ENCODE measurements at regions of chr18 and their contacts with region 1.

Region 1: DNA sequence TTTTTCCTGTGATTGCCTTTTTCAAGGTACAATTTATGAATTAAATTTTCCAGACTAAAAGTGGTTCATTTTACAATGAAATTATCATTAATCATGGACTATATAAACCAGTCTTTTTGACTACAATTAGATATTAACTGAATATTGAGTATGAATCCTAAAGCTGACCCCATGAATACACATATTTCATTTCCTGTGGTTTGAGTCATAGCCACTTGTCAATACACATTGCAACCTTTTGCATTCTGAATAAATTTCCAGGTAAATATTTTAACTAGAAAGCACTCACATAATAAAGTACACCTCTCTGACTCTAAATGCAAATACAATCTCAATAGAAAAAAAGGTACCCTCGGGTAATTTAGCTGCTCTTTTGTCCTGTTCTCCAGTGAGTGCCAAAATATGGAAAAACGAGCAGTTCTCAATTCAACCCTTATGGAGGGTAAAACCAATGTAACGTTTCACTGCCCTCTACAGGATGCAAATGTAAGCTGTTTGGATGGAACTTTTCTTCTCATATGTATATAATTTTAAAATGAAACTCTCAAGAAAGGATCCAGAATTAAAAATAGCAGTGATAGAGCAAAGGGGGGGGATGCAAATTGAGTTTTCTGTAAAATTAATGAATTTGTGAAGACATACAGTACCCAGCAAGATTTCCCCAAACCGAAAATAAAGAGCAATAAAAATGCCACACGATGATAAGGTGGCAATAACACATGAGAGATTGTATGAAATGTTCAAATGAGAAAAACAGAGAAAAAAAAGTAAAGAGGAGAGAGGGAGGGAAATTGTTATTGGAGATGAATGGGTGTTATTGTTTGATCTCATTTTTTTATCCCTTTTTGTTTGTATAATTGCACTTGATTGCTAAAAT is 1795.7 kb upstream of the PIK3C3 start:
- DNase-seq: peak; percentile 1
- ATAC-seq: peak; percentile 85
- H3K4me3 ChIP-seq: no peak overlapping the region
- H3K27ac ChIP-seq: no peak overlapping the region
- H3K4me1 ChIP-seq: no peaks in the 10 kb centered on the region
- H3K27me3 ChIP-seq: no peaks in the 10 kb centered on the region
- CTCF ChIP-seq: peak; percentile 33 to 62 (median 44); a peak in 4 of 6 replicates
- EP300 ChIP-seq: no peak
- POLR2A ChIP-seq: no peak
- RAD21 ChIP-seq: peak; percentile 63

Region 2: DNA sequence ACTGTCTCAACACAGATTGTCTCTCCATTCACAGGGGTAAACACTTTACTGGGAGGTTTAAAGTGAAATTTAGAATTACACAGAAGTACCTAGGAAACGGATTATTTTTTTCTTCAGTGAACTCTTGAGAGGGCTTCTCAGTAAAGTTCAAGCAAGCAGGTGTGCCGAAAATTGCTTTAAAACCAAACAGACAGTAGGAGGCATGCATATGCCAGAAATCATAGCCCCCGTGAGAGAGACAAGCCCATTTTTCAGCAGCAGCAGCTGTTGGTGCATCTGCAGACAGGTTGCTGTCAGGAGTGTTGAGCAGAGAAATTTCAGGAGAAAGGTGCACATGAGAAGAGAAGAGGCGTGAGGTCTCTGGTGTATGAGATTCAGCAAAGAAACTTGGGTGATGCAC is 478.3 kb before region 1 on chr18:
- CTCF ChIA-PET with region 1: interaction called, 11 read pairs
- POLR2A ChIA-PET with region 1: no interaction called
- RAD21 ChIA-PET with region 1: no interaction called
- SMC1A ChIA-PET with region 1: interaction called, 3 read pairs
- in situ Hi-C with region 1: no loop called
- intact Hi-C with region 1: loop called (anchors 10 kb)
- DNase-seq: no peak
- ATAC-seq: no peak
- H3K4me3 ChIP-seq: no peak overlapping the region
- H3K27ac ChIP-seq: no peak overlapping the region
- H3K4me1 ChIP-seq: no peaks in the 10 kb centered on the region
- H3K27me3 ChIP-seq: no peaks in the 10 kb centered on the region
- CTCF ChIP-seq: no peak; a peak in 1 of 6 replicates
- EP300 ChIP-seq: no peak
- POLR2A ChIP-seq: no peak
- RAD21 ChIP-seq: no peak

Region 3: GRCh38 chr18:39946623-39947061 is 212.7 kb before region 1 on chr18:
- CTCF ChIA-PET with region 1: no interaction called
- POLR2A ChIA-PET with region 1: no interaction called
- RAD21 ChIA-PET with region 1: no interaction called
- SMC1A ChIA-PET with region 1: no interaction called
- in situ Hi-C with region 1: no loop called
- intact Hi-C with region 1: loop called (anchors 5 kb)
- DNase-seq: no peak
- ATAC-seq: peak; percentile 22; the same call in 2 of the 3 replicates
- H3K4me3 ChIP-seq: no peak overlapping the region
- H3K27ac ChIP-seq: no peak overlapping the region
- H3K4me1 ChIP-seq: no peaks in the 10 kb centered on the region
- H3K27me3 ChIP-seq: no peaks in the 10 kb centered on the region
- CTCF ChIP-seq: no peak
- EP300 ChIP-seq: no peak
- POLR2A ChIP-seq: no peak
- RAD21 ChIP-seq: no peak

Region 4: DNA sequence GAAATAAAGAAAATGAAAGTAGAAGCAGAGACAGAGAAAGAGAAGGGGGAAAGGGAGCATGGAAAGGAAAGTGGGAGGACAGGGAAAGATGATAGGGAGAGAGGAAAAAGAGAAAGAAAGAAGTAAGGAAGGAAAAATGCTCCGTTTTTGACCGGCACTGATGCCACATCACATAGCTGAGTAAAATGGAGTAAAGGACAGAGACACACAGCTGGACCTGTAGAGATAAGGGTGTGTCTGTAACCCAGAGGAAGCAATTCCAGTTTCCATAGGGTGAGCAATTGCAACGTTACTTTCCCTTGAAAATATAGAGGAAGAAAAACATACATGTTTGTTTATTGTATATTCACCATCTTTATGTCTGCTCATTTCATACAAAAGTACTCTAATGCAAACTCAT is 71.2 kb before region 1 on chr18:
- CTCF ChIA-PET with region 1: interaction called, 12 read pairs
- POLR2A ChIA-PET with region 1: no interaction called
- RAD21 ChIA-PET with region 1: interaction called, 7 read pairs
- SMC1A ChIA-PET with region 1: interaction called, 14 read pairs
- in situ Hi-C with region 1: no loop called
- intact Hi-C with region 1: loop called (anchors 2 kb)
- DNase-seq: no peak
- ATAC-seq: peak; percentile 25; the same call in 1 of the 3 replicates
- H3K4me3 ChIP-seq: no peak overlapping the region
- H3K27ac ChIP-seq: no peak overlapping the region
- H3K4me1 ChIP-seq: no peaks in the 10 kb centered on the region
- H3K27me3 ChIP-seq: no peaks in the 10 kb centered on the region
- CTCF ChIP-seq: no peak
- EP300 ChIP-seq: no peak
- POLR2A ChIP-seq: no peak
- RAD21 ChIP-seq: no peak